ENCODE measurements at regions of chr17 and their contacts with region 1.

Region 1: DNA sequence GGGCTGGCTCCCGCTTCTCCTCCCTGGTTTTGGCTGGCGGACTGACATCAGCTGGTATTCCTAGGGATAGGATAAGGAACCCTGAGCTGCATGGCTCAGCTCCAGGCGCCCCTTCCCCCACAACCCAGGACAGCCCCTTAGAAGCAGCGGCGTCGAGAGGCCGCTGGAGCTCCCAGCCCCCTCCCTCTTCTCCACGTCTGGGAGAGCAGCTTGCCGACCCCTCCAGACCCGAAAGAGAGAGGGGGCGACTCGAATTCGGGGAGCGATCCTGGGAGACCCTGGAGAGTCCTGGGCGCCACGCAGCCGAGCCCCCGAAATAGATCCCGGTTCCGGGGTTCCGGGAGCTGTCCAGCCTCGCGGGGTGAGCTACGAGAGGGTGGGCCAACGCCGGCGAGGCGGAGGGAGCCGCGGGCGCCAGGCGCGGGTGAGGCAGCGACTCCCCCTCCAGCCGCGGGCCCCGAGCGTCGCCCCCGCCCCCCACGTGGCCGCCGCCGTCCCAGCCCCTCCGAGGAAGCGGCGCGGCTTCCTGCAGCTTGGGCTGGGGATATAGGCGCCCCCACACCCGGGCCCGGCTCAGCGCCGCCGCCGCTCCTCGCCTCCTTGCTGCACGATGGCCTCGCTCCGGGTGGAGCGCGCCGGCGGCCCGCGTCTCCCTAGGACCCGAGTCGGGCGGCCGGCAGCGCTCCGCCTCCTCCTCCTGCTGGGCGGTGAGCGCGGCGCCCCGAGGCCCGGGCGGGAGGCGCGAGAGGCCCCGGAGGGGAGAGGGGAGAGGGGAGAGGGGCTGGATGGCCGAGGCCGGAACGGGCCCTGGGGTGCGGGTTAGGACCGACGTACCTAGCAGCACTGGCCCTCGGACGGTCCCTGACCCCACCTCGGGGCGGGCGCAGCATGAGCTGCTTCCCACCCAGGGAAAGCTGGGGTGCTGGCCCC is at the start of gene RAMP2:
- DNase-seq: peak; percentile 84
- H3K4me3 ChIP-seq: peak within 1 kb of the TSS; percentile 39 to 43; a peak in 3 of 4 replicates
- H3K27ac ChIP-seq: no peak within 1 kb of the TSS
- H3K4me1 ChIP-seq: peaks cover 5 to 16% of the 10 kb centered on the region in 2 experiments; a peak in 2 of 4 replicates
- H3K27me3 ChIP-seq: peaks cover 12% of the 10 kb centered on the region; the same call in 1 of the 2 replicates
- CTCF ChIP-seq: no peak
- EP300 ChIP-seq: no peak
- RAD21 ChIP-seq: no peak
- polyA plus RNA-seq, gene RAMP2: 2.5 and 3.0 TPM in 2 replicates

Region 2: GRCh38 chr17:42720996-42721583 is 39.8 kb before region 1 on chr17:
- CTCF ChIA-PET with region 1: interaction called, 53 read pairs
- POLR2A ChIA-PET with region 1: interaction called, 4 read pairs
- DNase-seq: peak; percentile 75
- H3K4me3 ChIP-seq: no peak overlapping the region; a peak in 1 of 4 replicates
- H3K27ac ChIP-seq: no peak overlapping the region
- H3K4me1 ChIP-seq: no peaks in the 10 kb centered on the region
- H3K27me3 ChIP-seq: no peaks in the 10 kb centered on the region
- CTCF ChIP-seq: peak; percentile 81
- EP300 ChIP-seq: no peak
- RAD21 ChIP-seq: peak; percentile 83

Region 3: DNA sequence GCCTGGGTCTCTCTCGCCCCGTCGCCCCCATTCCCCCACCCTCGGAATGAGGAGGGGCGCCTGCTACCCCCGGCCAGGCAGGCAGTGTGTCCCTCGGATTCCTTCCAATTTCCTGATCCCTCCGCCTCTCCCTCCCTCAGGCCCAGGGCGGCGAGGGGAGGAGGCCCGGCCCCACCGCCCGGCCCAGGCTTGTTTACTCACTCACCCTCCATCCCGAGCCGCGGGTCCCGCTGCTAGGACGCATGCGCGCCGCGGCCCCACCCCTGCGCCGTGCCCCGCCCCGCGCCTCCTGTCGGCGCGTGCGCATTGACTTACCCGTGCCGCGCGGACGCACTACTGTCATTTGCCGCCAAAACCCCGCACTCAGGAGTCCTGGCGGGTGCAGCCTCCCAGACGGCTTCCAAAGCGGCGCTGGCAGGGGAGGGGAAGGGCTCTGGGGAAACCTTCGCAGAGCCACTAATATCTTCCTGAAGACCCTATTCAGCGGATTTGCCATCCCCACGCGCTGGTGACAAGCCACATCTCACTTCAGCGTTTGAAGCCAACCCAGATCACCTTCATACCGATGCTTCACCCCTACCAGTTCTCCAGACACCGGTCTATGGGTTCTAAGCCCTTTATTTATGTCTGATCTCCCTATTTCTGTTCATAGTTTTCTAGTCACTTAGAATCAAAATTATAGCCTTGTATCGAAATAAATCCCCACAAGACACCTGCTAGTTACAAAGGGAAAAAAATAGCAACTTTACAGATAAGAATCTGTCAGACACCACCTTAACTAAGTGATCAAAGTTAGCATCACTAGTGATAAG is 15.9 kb before region 1 on chr17 and contains the start of gene EZH1:
- CTCF ChIA-PET with region 1: interaction called, 37 read pairs
- POLR2A ChIA-PET with region 1: interaction called, 4 read pairs
- DNase-seq: peak; percentile 100
- H3K4me3 ChIP-seq: peak within 1 kb of the TSS; percentile 60 to 70
- H3K27ac ChIP-seq: peak within 1 kb of the TSS; percentile 81 to 88
- H3K4me1 ChIP-seq: peaks cover 0 to 11% of the 10 kb centered on the region in 2 experiments; a peak in 1 of 4 replicates
- H3K27me3 ChIP-seq: no peaks in the 10 kb centered on the region; the same call in 1 of the 2 replicates
- CTCF ChIP-seq: no peak
- EP300 ChIP-seq: no peak
- RAD21 ChIP-seq: no peak
- polyA plus RNA-seq, gene EZH1: 28.6 and 42.9 TPM in 2 replicates

Region 4: GRCh38 chr17:42773290-42774035 is 12.5 kb after region 1 on chr17 and contains the start of gene VPS25:
- CTCF ChIA-PET with region 1: interaction called, 48 read pairs
- POLR2A ChIA-PET with region 1: interaction called, 17 read pairs
- DNase-seq: peak; percentile 85
- H3K4me3 ChIP-seq: peak within 1 kb of the TSS; percentile 73 to 98
- H3K27ac ChIP-seq: peak within 1 kb of the TSS; percentile 68 to 90
- H3K4me1 ChIP-seq: peaks cover 3 to 15% of the 10 kb centered on the region in 2 experiments; a peak in 2 of 4 replicates
- H3K27me3 ChIP-seq: no peaks in the 10 kb centered on the region
- CTCF ChIP-seq: peak; percentile 24; the same call in 1 of the 2 replicates
- EP300 ChIP-seq: peak in 1 of 2 experiments; percentile 35; a peak in 1 of 4 replicates
- RAD21 ChIP-seq: 0 out of 2 replicates have a peak, but pooled peaks have one; percentile 7
- polyA plus RNA-seq, gene VPS25: 127 and 158 TPM in 2 replicates

Measured in SK-N-SH (cell line).